CD8-positive, alpha-beta T cell (primary cell): ENCODE measurements at regions of chr2 and their contacts with region 1.

Region 1: GRCh38 chr2:197813093-197813787 is 8.8 kb downstream of the PLCL1 start:
- DNase-seq: peak in 2 of 9 experiments; percentile 28 to 45
- ATAC-seq: no peak
- H3K4me3 ChIP-seq: no peak overlapping the region
- H3K4me3 Mint-ChIP-seq: no peak overlapping the region
- H3K27ac ChIP-seq: no peak overlapping the region
- H3K27ac Mint-ChIP-seq: no peak overlapping the region
- H3K4me1 ChIP-seq: peaks cover 18% of the 10 kb centered on the region
- H3K4me1 Mint-ChIP-seq: peaks cover 28% of the 10 kb centered on the region
- H3K27me3 ChIP-seq: peaks cover 0 to 3% of the 10 kb centered on the region in 2 experiments
- H3K27me3 Mint-ChIP-seq: peaks cover 2% of the 10 kb centered on the region
- CTCF ChIP-seq: peak; percentile 62

Region 2: DNA sequence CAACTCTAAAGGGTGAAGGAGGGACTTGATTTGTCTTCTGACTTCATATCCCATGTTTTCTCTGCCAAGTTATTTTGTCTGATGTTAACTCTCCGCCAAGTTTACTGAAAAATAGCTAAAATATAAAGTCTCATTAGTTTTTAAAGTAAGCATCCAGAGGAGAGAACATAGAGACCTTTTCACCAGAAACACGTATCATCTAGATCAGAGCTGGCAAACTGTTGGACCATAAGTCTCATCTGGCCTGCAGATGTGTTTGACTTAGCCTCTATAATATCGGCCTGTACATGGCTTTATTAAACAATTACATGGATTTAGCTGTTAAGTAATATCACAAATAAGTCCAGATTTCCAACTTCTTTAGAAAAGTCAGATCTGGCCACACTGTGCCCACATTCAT is 173.7 kb after region 1 on chr2:
- CTCF ChIA-PET with region 1: no interaction called
- POLR2A ChIA-PET with region 1: no interaction called
- intact Hi-C with region 1: loop called in 1 of 2 experiments (anchors 5 kb)
- DNase-seq: no peak
- ATAC-seq: no peak
- H3K4me3 ChIP-seq: no peak overlapping the region
- H3K4me3 Mint-ChIP-seq: no peak overlapping the region
- H3K27ac ChIP-seq: no peak overlapping the region
- H3K27ac Mint-ChIP-seq: no peak overlapping the region
- H3K4me1 ChIP-seq: no peaks in the 10 kb centered on the region
- H3K4me1 Mint-ChIP-seq: peaks cover 3% of the 10 kb centered on the region
- H3K27me3 ChIP-seq: no peaks in the 10 kb centered on the region
- H3K27me3 Mint-ChIP-seq: no peaks in the 10 kb centered on the region
- CTCF ChIP-seq: no peak

Region 3: DNA sequence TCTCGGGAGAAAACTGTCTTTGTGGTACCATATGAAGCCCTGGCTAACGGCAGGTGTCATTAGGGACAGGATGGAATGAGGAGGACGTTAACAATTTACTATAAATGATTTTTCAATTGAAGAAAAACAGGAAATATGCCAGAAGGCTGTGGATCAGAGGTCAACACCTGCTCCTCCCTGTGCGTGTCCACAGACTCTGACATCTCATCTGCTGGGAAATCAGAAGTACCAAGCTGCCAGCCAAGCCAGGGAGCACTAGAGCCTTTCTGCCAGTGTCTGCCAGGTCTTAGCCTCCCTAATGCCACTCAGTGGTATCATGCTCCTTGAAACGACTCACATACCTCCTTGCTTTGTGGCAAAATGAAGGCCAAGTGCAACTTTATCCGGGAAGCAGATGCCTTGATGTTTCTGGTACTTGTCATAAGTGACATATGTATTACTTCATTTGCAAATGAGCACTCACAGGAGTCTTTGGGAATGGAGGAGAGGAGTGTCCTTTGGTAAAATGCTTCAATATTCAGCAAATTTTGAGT is 1103.4 kb after region 1 on chr2:
- CTCF ChIA-PET with region 1: no interaction called
- POLR2A ChIA-PET with region 1: no interaction called
- intact Hi-C with region 1: no loop called
- DNase-seq: no peak
- ATAC-seq: no peak
- H3K4me3 ChIP-seq: no peak overlapping the region
- H3K4me3 Mint-ChIP-seq: no peak overlapping the region
- H3K27ac ChIP-seq: no peak overlapping the region
- H3K27ac Mint-ChIP-seq: no peak overlapping the region
- H3K4me1 ChIP-seq: no peaks in the 10 kb centered on the region
- H3K4me1 Mint-ChIP-seq: no peaks in the 10 kb centered on the region
- H3K27me3 ChIP-seq: no peaks in the 10 kb centered on the region
- H3K27me3 Mint-ChIP-seq: no peaks in the 10 kb centered on the region
- CTCF ChIP-seq: no peak